Activated B cell treated with CpG ODN at 0.5 μM for 24 hours (primary cell): ENCODE measurements at regions of chr7 and their contacts with region 1.

Region 1: DNA sequence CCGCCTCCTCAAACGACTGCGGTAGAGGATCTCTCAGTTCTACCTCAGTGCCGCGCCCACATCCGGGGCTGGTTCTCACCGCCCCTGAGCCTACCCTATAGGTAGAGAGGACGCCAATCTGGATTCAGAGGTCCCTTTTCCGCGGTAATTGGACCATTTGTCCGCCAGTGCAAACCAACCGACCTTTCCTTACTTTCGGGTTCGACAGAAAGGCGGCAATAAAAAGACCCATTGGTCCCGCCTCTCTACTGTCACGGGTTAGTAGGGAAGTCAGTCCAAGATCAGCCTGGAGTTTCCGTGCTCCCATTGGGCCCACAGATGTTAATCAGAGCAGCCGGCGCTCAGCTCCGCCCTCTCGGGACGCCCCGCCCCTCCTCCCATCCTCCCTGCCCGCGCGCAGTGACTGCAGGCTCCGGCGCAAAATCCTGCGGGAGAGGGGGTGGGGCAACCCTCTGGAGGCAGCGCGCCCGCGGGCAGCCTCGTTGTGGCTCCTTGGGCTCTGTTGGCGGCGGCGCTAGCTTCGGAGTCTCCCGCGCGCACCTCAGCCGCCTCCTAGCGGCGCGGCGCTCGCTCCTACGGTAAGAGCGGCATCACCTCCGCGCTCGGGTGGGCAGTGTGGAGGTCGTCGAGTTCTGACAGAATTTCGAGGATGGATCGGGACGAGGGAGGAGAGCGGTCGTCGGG is at the starts of genes PHTF2 and TMEM60:
- DNase-seq: peak; percentile 85
- ATAC-seq: peak; percentile 88
- H3K4me3 Mint-ChIP-seq: peak within 1 kb of the TSS; percentile 98
- H3K27ac Mint-ChIP-seq: peak within 1 kb of the TSS; percentile 91
- H3K4me1 Mint-ChIP-seq: peaks cover 82% of the 10 kb centered on the region
- H3K27me3 Mint-ChIP-seq: no peaks in the 10 kb centered on the region
- CTCF ChIP-seq: no peak
- total RNA-seq, gene PHTF2: 31.4 and 38.9 TPM in 2 replicates
- total RNA-seq, gene TMEM60: 15.3 and 16.3 TPM in 2 replicates

Region 2: GRCh38 chr7:77536413-77537135 is 262.0 kb before region 1 on chr7:
- CTCF ChIA-PET with region 1: no interaction called
- POLR2A ChIA-PET with region 1: interaction called, 4 read pairs
- intact Hi-C with region 1: loop called (anchors 1 kb)
- DNase-seq: peak; percentile 96
- ATAC-seq: peak; percentile 88
- H3K4me3 Mint-ChIP-seq: peak overlapping the region; percentile 98
- H3K27ac Mint-ChIP-seq: peak overlapping the region; percentile 94
- H3K4me1 Mint-ChIP-seq: peaks cover 33% of the 10 kb centered on the region
- H3K27me3 Mint-ChIP-seq: no peaks in the 10 kb centered on the region
- CTCF ChIP-seq: no peak

Region 3: GRCh38 chr7:77759294-77759889 is 39.1 kb before region 1 on chr7:
- CTCF ChIA-PET with region 1: interaction called, 5 read pairs
- POLR2A ChIA-PET with region 1: interaction called, 4 read pairs
- intact Hi-C with region 1: loop called (anchors 2 kb)
- DNase-seq: no peak
- ATAC-seq: peak; percentile 64
- H3K4me3 Mint-ChIP-seq: no peak overlapping the region
- H3K27ac Mint-ChIP-seq: peak overlapping the region; percentile 50
- H3K4me1 Mint-ChIP-seq: peaks cover 52% of the 10 kb centered on the region
- H3K27me3 Mint-ChIP-seq: no peaks in the 10 kb centered on the region
- CTCF ChIP-seq: peak; percentile 22

Region 4: GRCh38 chr7:77823787-77824186 is 25.3 kb after region 1 on chr7:
- CTCF ChIA-PET with region 1: interaction called, 5 read pairs
- POLR2A ChIA-PET with region 1: interaction called, 29 read pairs
- intact Hi-C with region 1: loop called (anchors 1 kb)
- DNase-seq: no peak
- ATAC-seq: peak; percentile 35
- H3K4me3 Mint-ChIP-seq: peak overlapping the region; percentile 83
- H3K27ac Mint-ChIP-seq: peak overlapping the region; percentile 97
- H3K4me1 Mint-ChIP-seq: peaks cover 81% of the 10 kb centered on the region
- H3K27me3 Mint-ChIP-seq: no peaks in the 10 kb centered on the region
- CTCF ChIP-seq: no peak

Region 5: DNA sequence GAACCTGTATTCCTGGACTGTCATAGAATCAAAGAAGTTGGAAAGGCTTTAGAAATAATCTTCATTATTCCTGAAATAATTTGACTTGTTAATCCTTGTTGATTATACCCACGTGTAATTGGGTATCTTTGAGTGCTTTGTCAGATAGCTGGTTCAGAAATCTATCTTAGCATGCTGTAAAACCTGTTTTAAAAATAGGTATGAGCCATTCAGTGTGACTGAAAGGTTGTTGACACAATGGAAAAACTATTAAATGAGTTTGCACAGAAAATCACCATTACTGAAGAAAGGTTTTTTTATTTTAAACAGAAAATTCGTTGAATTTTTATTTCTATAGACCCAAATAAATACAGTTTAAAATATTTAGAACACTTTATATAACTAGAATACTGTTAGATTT is 38.8 kb after region 1 on chr7:
- CTCF ChIA-PET with region 1: interaction called, 4 read pairs
- POLR2A ChIA-PET with region 1: interaction called, 16 read pairs
- intact Hi-C with region 1: loop called (anchors 5 kb)
- DNase-seq: no peak
- ATAC-seq: no peak
- H3K4me3 Mint-ChIP-seq: no peak overlapping the region
- H3K27ac Mint-ChIP-seq: no peak overlapping the region
- H3K4me1 Mint-ChIP-seq: peaks cover 67% of the 10 kb centered on the region
- H3K27me3 Mint-ChIP-seq: no peaks in the 10 kb centered on the region
- CTCF ChIP-seq: no peak

Region 6: GRCh38 chr7:77903597-77903996 is 105.1 kb after region 1 on chr7:
- CTCF ChIA-PET with region 1: interaction called, 11 read pairs
- POLR2A ChIA-PET with region 1: interaction called, 22 read pairs
- intact Hi-C with region 1: loop called (anchors 1 kb)
- DNase-seq: no peak
- ATAC-seq: peak; percentile 37
- H3K4me3 Mint-ChIP-seq: no peak overlapping the region
- H3K27ac Mint-ChIP-seq: peak overlapping the region; percentile 96
- H3K4me1 Mint-ChIP-seq: peaks cover 51% of the 10 kb centered on the region
- H3K27me3 Mint-ChIP-seq: no peaks in the 10 kb centered on the region
- CTCF ChIP-seq: no peak

Region 7: GRCh38 chr7:78039790-78040776 is 241.5 kb after region 1 on chr7:
- CTCF ChIA-PET with region 1: no interaction called
- POLR2A ChIA-PET with region 1: no interaction called
- intact Hi-C with region 1: no loop called
- DNase-seq: peak; percentile 55
- ATAC-seq: peak; percentile 79
- H3K4me3 Mint-ChIP-seq: no peak overlapping the region
- H3K27ac Mint-ChIP-seq: no peak overlapping the region
- H3K4me1 Mint-ChIP-seq: peaks cover 2% of the 10 kb centered on the region
- H3K27me3 Mint-ChIP-seq: peaks cover 20% of the 10 kb centered on the region
- CTCF ChIP-seq: peak; percentile 18